ENCODE measurements at regions of chr3 and their contacts with region 1.

Region 1: GRCh38 chr3:7382293-7383010 is 521.5 kb downstream of the GRM7 start:
- DNase-seq: peak; percentile 75
- H3K4me3 ChIP-seq: no peak overlapping the region
- H3K27ac ChIP-seq: peak overlapping the region in 1 of 2 donors; percentile 33
- H3K4me1 ChIP-seq: peaks cover 3% of the 10 kb centered on the region
- H3K27me3 ChIP-seq: no peaks in the 10 kb centered on the region
- CTCF ChIP-seq: no peak
- POLR2A ChIP-seq: no peak

Region 2: DNA sequence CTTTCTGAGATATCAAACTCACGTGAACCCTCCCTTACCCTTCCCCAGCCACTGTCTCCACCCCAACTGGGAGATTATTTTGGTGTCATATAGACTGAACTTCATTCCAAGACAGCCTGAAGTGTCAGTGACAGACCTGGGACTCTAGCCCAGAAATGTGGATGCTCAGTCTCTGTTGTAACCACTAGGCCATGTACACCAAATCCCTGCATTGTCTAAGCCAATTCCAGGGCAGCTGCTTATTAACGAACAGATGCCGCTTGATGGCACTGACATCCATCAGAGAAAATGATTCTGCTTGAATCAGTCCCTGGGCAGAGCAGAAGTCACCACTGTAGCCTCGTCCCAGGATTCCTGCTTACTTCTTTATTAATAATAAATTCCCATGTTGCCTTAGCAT is 216.0 kb before region 1 on chr3:
- intact Hi-C with region 1: loop called (anchors 10 kb)
- DNase-seq: no peak
- H3K4me3 ChIP-seq: no peak overlapping the region
- H3K27ac ChIP-seq: no peak overlapping the region
- H3K4me1 ChIP-seq: no peaks in the 10 kb centered on the region
- H3K27me3 ChIP-seq: no peaks in the 10 kb centered on the region
- CTCF ChIP-seq: no peak
- POLR2A ChIP-seq: no peak

Region 3: DNA sequence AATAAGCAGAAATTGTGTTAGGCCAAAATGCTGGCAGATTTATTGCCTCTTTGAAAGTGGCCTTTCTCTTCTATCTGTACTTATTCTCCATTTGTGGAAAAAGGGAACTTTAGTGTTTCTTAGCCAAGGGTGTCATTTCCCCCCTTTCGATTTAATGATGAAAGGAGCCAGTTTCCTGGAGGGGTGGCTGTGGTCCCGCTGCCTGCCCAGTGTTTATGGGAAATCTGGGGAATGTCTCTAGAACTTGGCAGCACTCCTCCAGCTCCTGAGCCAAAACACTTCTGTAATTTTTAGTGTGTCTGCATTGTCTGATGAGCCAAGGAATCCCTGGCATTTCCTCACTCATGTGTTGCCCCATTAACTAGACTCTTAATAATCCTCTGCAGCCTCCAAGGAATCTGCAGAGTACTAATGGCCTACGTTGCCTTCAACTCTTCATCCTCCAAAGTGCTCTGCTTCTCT is 72.8 kb before region 1 on chr3:
- intact Hi-C with region 1: loop called (anchors 5 kb)
- DNase-seq: peak; percentile 75
- H3K4me3 ChIP-seq: no peak overlapping the region
- H3K27ac ChIP-seq: no peak overlapping the region
- H3K4me1 ChIP-seq: no peaks in the 10 kb centered on the region
- H3K27me3 ChIP-seq: no peaks in the 10 kb centered on the region
- CTCF ChIP-seq: no peak
- POLR2A ChIP-seq: no peak

Region 4: DNA sequence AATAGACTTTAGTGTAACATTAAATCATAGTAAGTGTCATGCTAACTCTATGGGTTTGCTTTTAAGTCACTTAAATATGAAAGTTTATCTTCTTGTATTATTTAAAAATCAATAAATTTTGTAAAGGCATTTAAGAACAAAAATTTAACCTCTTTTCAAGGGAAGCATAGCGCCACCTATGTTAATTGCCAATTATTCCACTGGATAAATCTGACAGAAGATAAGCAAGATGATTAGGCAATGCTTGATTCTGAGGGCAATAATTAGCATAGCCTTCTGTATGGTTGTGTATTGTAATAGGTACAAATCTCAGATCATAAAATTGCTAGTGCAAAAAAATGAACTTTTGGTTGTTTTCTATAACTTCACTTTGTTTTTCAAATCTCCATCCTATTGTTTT is 38.6 kb after region 1 on chr3:
- intact Hi-C with region 1: no loop called
- DNase-seq: no peak
- H3K4me3 ChIP-seq: no peak overlapping the region
- H3K27ac ChIP-seq: no peak overlapping the region
- H3K4me1 ChIP-seq: no peaks in the 10 kb centered on the region
- H3K27me3 ChIP-seq: no peaks in the 10 kb centered on the region
- CTCF ChIP-seq: no peak
- POLR2A ChIP-seq: no peak

Region 5: DNA sequence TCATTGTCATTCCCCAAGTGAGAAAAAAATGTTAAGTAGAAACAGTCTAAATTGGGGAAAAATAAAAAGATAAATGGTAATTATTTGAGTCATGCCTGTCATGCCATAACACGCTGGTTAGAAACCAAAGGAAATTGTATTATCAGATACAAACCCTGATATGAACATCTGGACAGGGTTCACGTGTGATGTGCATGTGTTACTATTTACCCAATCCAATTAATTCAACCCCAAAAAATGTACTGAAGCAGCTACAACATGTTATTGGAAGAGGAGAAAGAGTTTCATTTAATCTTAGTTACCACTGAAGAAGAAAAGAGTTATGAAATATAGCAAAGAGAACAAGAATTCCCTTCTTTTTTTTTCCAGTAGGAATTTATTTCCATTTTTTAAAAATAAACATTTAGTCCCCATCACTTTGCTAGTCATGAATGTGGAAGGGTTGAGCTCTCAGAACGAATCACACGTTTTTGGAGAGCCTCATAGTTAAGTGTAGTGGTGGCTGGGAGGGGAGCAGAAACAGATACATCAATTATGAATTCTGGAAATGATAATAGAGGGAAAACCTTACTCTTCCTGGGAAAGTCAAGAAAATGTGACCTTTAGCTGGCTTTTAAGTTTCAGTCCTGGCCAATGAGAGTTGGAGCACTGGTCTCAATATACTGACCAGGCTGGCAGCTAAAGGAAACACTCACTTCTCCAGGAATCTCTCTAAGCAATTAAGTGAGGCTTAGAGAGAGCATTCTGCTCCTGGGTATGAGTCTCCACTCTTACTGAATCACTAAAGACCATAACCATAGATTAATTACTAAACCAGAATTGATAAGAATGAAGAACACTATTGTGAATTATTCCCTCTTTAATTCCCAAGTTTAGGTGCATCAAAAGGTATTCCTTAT is 275.0 kb after region 1 on chr3:
- intact Hi-C with region 1: no loop called
- DNase-seq: no peak
- H3K4me3 ChIP-seq: no peak overlapping the region
- H3K27ac ChIP-seq: no peak overlapping the region
- H3K4me1 ChIP-seq: no peaks in the 10 kb centered on the region
- H3K27me3 ChIP-seq: no peaks in the 10 kb centered on the region
- CTCF ChIP-seq: no peak
- POLR2A ChIP-seq: no peak

Measured in prostate gland (tissue), 2 donors.